Right cardiac atrium (tissue), 5 donors: ENCODE measurements at regions of chr13 and their contacts with region 1.

Region 1: GRCh38 chr13:99916366-99917103 is 55.0 kb downstream of the ZIC5 start:
- DNase-seq: no peak
- ATAC-seq: peak; percentile 74 to 77
- H3K4me3 ChIP-seq: no peak overlapping the region
- H3K27ac ChIP-seq: no peak overlapping the region
- H3K4me1 ChIP-seq: no peaks in the 10 kb centered on the region
- H3K27me3 ChIP-seq: no peaks in the 10 kb centered on the region

Region 2: DNA sequence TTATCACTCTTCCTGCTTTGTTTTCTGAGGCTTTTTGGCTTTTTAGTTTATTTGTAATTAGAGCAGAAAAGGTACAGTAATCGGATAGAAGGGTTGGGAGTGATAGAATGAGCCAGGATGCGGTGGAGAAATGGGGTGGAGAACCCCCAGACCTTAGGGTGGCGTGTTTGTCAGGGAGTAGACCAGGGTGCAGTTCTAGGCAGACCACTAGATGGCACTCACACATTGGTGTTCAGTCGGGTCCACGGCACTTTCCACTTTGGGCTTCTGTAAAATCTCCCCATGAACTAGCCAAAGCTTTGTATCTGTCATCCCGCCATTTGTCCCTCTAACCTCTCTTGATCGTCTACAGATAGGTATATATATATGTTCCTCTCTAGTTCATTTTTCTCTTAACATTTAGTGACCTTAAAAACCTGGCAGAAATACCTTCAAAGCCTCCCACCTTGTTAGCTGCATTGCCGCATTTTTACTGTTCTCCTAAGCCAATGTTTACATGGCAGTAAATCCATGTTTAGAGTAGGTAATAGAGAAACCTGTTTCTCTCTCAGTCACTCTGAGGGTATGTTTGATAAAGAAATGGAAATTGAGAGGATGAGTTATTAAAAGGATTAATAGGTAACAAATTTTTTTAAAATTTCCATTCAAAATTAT is 260.3 kb before region 1 on chr13:
- intact Hi-C with region 1: loop called in 3 of 4 experiments (anchors 10 kb)
- DNase-seq: peak; percentile 73 to 85 (median 78)
- ATAC-seq: peak; percentile 72 to 74
- H3K4me3 ChIP-seq: no peak overlapping the region
- H3K27ac ChIP-seq: no peak overlapping the region
- H3K4me1 ChIP-seq: no peaks in the 10 kb centered on the region
- H3K27me3 ChIP-seq: no peaks in the 10 kb centered on the region

Region 3: DNA sequence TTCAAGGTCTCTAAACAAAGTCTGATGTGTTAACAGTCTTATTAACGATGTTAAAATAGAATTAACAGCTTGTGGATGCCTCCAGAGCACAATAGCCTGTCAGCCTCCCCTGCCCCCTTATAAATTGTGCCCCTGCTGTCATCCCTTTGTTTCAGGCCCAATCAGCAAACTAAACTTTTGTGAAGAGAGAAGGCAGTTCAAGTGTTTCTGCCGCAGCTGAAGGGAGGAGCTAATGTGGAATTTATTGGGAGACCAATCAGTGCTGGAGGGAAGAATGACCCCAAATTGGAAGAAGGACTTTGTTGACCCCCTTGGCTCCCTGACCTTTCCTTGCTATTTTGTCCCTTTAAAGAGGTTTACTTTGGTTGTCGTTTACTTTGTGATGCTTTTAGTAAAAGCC is 254.7 kb before region 1 on chr13:
- intact Hi-C with region 1: loop called in 3 of 4 experiments (anchors 10 kb)
- DNase-seq: no peak
- ATAC-seq: no peak
- H3K4me3 ChIP-seq: no peak overlapping the region
- H3K27ac ChIP-seq: no peak overlapping the region
- H3K4me1 ChIP-seq: no peaks in the 10 kb centered on the region
- H3K27me3 ChIP-seq: no peaks in the 10 kb centered on the region

Region 4: GRCh38 chr13:99855526-99856420 is 60.8 kb before region 1 on chr13:
- intact Hi-C with region 1: no loop called
- DNase-seq: no peak
- ATAC-seq: no peak
- H3K4me3 ChIP-seq: no peak overlapping the region
- H3K27ac ChIP-seq: no peak overlapping the region
- H3K4me1 ChIP-seq: no peaks in the 10 kb centered on the region
- H3K27me3 ChIP-seq: no peaks in the 10 kb centered on the region

Region 5: GRCh38 chr13:99959538-99960230 is 43.1 kb after region 1 on chr13:
- intact Hi-C with region 1: no loop called
- DNase-seq: no peak
- ATAC-seq: no peak
- H3K4me3 ChIP-seq: peak overlapping the region; percentile 18
- H3K27ac ChIP-seq: no peak overlapping the region
- H3K4me1 ChIP-seq: peaks cover 4% of the 10 kb centered on the region
- H3K27me3 ChIP-seq: peaks cover 3% of the 10 kb centered on the region

Region 6: DNA sequence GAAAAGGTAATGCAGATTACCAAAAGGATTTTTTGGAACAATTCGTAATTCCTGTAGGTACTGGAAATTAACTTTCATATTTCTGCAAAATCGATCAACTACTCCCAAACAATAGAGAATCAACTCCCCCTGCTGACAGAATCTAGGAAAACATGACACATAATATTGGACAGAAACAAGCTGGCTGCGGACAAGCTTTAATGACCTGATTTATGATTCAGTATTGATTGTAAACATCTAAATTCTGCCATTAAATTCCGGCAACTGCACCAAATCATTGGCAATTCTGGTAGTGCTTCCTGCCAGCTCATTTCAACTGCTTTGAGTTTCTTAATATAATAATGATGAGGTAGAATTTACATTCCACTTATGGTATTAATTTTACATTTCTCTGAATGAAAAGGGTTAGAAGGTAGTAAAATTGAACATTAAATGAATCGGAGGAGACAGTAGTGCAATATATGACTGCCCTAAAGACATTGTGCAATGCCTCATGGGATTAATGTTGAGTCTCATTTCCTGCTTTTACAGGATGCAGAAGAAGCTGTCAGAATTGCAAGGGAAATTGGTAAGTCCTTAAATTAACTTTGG is 318.9 kb after region 1 on chr13:
- intact Hi-C with region 1: loop called (anchors 5 to 10 kb)
- DNase-seq: no peak
- ATAC-seq: no peak
- H3K4me3 ChIP-seq: no peak overlapping the region
- H3K27ac ChIP-seq: no peak overlapping the region
- H3K4me1 ChIP-seq: no peaks in the 10 kb centered on the region
- H3K27me3 ChIP-seq: no peaks in the 10 kb centered on the region